ENCODE measurements at regions of chr12 and their contacts with region 1.

Region 1: GRCh38 chr12:121005346-121005815 is 10.9 kb downstream of the C12orf43 start:
- DNase-seq: peak; percentile 32
- H3K4me3 ChIP-seq: no peak overlapping the region
- H3K27ac ChIP-seq: no peak overlapping the region
- H3K4me1 ChIP-seq: no peaks in the 10 kb centered on the region
- H3K27me3 ChIP-seq: no peaks in the 10 kb centered on the region
- CTCF ChIP-seq: peak; percentile 67 to 78

Region 2: DNA sequence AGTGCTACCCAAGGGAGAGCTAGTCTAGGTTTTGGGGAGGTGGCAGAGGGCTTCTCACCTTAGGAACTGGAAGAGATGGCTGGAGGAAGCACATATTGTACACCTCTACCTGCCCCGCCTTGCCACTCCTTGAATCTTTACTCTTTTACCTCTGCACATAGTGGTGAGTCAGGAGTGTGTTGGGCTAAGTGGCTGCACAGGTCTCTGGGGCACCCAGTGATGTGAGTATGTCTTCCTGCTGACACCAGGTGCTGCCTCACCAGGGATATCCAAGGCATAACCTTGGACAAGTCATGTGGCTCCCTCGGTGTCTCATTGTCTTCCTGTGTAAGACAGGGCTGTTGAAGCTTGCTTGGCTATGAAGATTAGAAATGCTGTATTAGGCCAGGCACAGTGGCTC is 384.8 kb before region 1 on chr12:
- CTCF ChIA-PET with region 1: no interaction called
- dilution Hi-C with region 1: loop called (anchors 5 kb)
- in situ Hi-C with region 1: no loop called
- intact Hi-C with region 1: no loop called
- DNase-seq: peak; percentile 89
- H3K4me3 ChIP-seq: no peak overlapping the region
- H3K27ac ChIP-seq: no peak overlapping the region
- H3K4me1 ChIP-seq: peaks cover 14% of the 10 kb centered on the region
- H3K27me3 ChIP-seq: no peaks in the 10 kb centered on the region
- CTCF ChIP-seq: no peak

Region 3: DNA sequence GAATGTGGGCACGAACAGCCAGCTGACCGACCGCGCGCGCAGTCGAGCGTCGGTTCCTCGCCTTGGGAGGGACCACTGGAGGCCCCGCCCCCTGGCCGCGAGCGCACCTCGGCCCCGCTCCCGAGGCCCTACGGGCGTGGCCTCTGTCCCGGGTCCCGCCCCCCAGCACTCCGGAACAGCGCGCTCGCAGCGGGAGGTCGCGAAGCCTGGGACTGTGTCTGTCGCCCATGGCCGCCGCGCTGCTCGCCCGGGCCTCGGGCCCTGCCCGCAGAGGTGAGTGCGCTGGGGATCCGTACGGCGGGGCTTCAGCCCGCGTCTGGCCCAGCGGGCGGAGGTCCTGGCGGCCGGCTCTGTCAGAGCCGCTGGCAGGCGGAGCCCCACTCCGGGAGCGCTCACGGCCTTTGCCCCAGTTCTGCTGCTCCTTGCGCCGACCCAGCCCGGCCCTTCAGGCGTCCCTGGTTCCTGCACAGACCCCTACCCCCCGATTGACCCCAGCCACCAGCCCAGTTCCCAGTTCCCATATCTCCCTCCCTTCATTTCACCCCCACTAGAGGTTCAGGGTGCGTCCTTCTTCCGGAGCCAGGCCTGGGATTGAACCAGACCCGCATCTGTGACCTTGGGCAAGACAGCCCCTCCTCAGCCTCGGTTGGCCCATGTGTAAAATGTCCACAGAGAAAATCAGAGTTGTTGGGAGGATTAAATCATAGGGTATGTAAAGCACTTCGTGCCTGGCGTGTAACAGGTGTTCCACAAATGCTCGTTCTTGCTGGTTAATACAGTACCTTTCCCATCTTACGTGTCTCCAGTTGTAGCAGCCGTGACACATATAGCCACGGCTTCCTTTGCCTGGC is 279.5 kb before region 1 on chr12 and contains the start of gene ACADS:
- CTCF ChIA-PET with region 1: no interaction called
- dilution Hi-C with region 1: loop called (anchors 10 kb)
- in situ Hi-C with region 1: no loop called
- intact Hi-C with region 1: no loop called
- DNase-seq: peak; percentile 74
- H3K4me3 ChIP-seq: peak within 1 kb of the TSS; percentile 35 to 51 (median 50)
- H3K27ac ChIP-seq: no peak within 1 kb of the TSS
- H3K4me1 ChIP-seq: peaks cover 12% of the 10 kb centered on the region
- H3K27me3 ChIP-seq: no peaks in the 10 kb centered on the region
- CTCF ChIP-seq: no peak
- total RNA-seq, gene ACADS: 1.0 to 3.7 TPM

Region 4: DNA sequence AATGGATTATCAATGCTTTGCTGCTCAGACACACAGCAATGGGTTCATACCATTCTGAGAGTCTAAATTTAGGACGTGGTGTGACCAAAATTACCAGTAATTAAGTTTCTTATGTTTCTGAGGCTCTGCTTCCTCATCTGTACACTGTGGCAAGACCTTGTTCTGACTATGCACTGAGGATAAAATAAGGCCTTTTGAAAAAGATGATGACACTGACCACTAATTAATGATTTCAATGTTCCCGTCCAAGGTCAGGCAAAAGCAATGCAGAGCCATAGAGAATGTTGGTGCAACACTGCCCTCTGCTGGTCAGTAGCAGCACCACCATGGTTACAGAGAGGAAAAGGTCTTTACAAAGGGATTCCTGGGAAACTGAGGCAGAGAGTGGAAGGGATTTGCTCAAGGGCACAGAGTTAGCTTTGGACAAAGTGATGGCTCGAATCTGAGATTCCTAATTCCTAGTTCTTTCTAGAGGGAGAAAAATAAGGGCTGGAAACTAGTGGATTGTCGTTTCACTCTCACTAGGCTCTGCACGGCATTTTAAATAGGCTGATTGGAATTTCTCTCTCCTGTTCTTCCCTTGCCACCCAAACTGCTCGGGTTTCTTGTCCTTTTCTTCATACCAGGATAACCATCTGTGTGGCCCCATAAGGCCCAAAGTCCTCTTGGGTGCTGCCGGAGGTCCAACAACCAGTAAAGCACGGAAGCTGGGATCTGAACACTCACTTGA is 105.0 kb after region 1 on chr12:
- CTCF ChIA-PET with region 1: no interaction called
- dilution Hi-C with region 1: loop called (anchors 5 kb)
- in situ Hi-C with region 1: no loop called
- intact Hi-C with region 1: loop called (anchors 1 kb)
- DNase-seq: peak; percentile 38
- H3K4me3 ChIP-seq: no peak overlapping the region
- H3K27ac ChIP-seq: no peak overlapping the region
- H3K4me1 ChIP-seq: no peaks in the 10 kb centered on the region
- H3K27me3 ChIP-seq: no peaks in the 10 kb centered on the region
- CTCF ChIP-seq: peak; percentile 92 to 98

Region 5: GRCh38 chr12:121159467-121160307 is 154.3 kb after region 1 on chr12:
- CTCF ChIA-PET with region 1: no interaction called
- dilution Hi-C with region 1: no loop called
- in situ Hi-C with region 1: no loop called
- intact Hi-C with region 1: no loop called
- DNase-seq: no peak
- H3K4me3 ChIP-seq: no peak overlapping the region
- H3K27ac ChIP-seq: no peak overlapping the region
- H3K4me1 ChIP-seq: no peaks in the 10 kb centered on the region
- H3K27me3 ChIP-seq: no peaks in the 10 kb centered on the region
- CTCF ChIP-seq: no peak

Region 6: DNA sequence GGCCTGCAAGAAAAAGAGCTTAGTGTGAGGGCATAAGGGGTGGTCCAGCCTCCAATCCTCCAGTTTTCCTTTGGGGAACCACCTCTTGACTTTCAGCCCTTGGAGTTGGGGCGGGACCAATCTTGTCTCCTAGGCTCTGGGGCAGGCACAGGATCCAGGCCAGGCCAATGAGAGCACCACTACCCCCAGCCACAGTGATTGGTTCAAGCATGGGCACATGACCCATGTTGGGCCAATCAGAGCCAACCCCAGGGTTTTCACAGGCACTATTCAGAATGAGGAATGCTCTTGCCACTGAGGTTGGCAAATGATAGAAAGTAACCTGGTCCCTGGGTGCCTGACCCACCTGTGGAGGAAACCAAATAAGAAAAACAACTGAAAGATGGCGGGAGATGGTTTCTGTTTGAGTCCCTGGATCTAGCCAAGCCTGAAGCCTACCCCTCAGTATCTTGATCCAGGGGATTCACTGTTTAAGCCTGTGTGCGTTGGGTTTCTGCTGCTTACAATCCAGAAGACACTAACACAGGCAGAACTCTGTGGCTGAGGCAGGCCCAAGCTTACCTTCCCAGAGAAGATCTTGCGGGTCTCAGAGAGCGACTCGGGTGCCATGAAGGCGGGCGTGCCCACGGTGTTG is 247.4 kb after region 1 on chr12:
- CTCF ChIA-PET with region 1: no interaction called
- dilution Hi-C with region 1: loop called (anchors 5 kb)
- in situ Hi-C with region 1: no loop called
- intact Hi-C with region 1: no loop called
- DNase-seq: no peak
- H3K4me3 ChIP-seq: no peak overlapping the region
- H3K27ac ChIP-seq: no peak overlapping the region
- H3K4me1 ChIP-seq: no peaks in the 10 kb centered on the region
- H3K27me3 ChIP-seq: no peaks in the 10 kb centered on the region
- CTCF ChIP-seq: no peak

Measured in mammary epithelial cell (primary cell).